ENCODE measurements at regions of chrX and their contacts with region 1.

Region 1: DNA sequence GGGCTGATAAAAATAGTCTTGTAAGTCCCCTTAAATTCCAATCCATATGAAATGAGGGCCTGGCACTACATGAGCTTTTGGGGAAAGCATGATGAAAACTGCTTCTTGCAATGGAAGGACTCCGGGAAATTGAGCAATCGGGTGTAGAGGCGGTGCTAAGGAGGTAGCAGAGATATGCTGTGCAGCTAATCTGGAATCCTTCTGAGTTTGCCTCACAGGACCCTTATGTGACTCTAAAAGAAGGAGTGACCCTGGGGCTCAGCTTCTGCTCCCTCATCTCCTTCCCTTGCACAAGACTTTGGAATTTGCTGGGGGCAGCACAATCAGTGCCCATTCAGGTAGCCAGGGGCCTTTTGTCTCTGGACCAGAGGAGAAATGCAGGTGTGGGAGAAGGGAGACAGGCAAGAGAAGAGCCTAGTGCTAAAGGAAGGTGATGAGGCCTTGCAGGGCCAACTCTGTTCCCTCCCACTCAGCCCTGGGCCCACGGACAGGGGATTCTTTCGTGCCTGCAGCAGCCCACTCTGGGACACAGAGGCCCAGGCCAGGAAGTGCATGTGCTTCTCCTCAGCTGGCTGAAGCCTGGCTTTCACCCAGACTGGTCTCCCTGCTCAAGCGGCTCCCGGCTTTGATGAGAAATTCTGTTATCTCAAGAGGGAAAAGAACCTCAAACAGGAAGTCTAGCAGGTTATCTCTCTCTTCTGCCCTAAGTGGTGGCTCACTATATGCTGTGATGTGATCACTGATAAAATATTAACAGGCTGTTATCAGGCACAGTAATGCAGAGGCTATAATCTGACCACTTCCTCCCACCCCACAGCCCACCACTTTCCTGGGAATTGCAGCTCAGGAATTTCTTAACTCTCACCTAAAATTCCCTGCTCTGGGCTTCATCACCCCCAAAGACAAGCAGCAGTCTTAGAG is 13.1 kb downstream of the CLDN2 start:
- DNase-seq: peak; percentile 27
- H3K4me3 ChIP-seq: no peak overlapping the region
- H3K27ac ChIP-seq: no peak overlapping the region
- H3K4me1 ChIP-seq: peaks cover 21% of the 10 kb centered on the region
- H3K27me3 ChIP-seq: no peaks in the 10 kb centered on the region
- CTCF ChIP-seq: no peak
- POLR2A ChIP-seq: no peak

Region 2: GRCh38 chrX:106917830-106918500 is 15.3 kb before region 1 on chrX:
- CTCF ChIA-PET with region 1: interaction called, 5 read pairs
- POLR2A ChIA-PET with region 1: no interaction called
- dilution Hi-C with region 1: no loop called
- intact Hi-C with region 1: loop called (anchors 1 kb)
- DNase-seq: peak; percentile 86
- H3K4me3 ChIP-seq: no peak overlapping the region
- H3K27ac ChIP-seq: no peak overlapping the region
- H3K4me1 ChIP-seq: peaks cover 17% of the 10 kb centered on the region
- H3K27me3 ChIP-seq: peaks cover 3 to 17% of the 10 kb centered on the region in 2 experiments
- CTCF ChIP-seq: no peak
- POLR2A ChIP-seq: no peak

Region 3: DNA sequence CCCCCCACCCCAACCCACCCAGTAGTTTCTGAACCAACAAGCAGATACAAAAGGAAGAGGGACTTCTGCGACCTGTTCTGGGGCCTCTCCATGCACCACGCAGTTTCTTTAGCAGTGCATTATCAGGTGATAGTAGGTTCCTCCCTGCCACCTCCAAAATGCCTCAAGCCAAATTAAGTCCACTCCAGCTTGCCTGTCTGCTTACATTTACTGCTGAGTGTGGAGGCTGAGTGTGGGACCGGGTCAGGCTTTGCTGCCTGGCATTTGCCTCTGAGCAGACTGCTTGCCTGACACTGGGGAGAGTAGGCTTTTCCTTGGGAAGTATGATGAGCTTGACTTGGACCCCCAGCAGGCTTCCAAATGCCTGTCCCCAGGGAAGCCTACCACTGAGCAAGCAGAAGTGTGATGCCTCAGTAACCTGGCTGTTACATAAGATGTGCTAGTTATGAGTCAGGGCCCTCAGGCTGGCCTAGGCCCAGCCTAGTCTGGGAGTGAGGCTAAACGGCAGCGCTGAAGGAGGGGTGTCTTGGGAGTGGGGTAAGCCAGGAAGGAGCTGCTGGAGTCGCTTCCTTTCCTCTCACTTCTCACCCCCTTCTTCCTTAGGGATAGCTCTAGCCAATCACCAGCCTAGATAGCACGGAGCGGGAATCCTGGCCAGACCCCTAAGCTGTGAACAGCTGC is 833.3 kb after region 1 on chrX:
- CTCF ChIA-PET with region 1: no interaction called
- POLR2A ChIA-PET with region 1: no interaction called
- dilution Hi-C with region 1: no loop called
- intact Hi-C with region 1: no loop called
- DNase-seq: no peak
- H3K4me3 ChIP-seq: no peak overlapping the region
- H3K27ac ChIP-seq: no peak overlapping the region
- H3K4me1 ChIP-seq: no peaks in the 10 kb centered on the region
- H3K27me3 ChIP-seq: no peaks in the 10 kb centered on the region
- CTCF ChIP-seq: no peak
- POLR2A ChIP-seq: no peak

Measured in endothelial cell of umbilical vein (primary cell).